PC-3 (cell line): ENCODE measurements at regions of chr20 and their contacts with region 1.

Region 1: GRCh38 chr20:5658912-5659345 is 91.3 kb upstream of the SHLD1 start:
- DNase-seq: peak; percentile 12
- ATAC-seq: no peak
- H3K4me3 ChIP-seq: no peak overlapping the region
- H3K27ac ChIP-seq: no peak overlapping the region
- H3K4me1 ChIP-seq: peaks cover 36% of the 10 kb centered on the region
- H3K27me3 ChIP-seq: no peaks in the 10 kb centered on the region
- CTCF ChIP-seq: no peak

Region 2: DNA sequence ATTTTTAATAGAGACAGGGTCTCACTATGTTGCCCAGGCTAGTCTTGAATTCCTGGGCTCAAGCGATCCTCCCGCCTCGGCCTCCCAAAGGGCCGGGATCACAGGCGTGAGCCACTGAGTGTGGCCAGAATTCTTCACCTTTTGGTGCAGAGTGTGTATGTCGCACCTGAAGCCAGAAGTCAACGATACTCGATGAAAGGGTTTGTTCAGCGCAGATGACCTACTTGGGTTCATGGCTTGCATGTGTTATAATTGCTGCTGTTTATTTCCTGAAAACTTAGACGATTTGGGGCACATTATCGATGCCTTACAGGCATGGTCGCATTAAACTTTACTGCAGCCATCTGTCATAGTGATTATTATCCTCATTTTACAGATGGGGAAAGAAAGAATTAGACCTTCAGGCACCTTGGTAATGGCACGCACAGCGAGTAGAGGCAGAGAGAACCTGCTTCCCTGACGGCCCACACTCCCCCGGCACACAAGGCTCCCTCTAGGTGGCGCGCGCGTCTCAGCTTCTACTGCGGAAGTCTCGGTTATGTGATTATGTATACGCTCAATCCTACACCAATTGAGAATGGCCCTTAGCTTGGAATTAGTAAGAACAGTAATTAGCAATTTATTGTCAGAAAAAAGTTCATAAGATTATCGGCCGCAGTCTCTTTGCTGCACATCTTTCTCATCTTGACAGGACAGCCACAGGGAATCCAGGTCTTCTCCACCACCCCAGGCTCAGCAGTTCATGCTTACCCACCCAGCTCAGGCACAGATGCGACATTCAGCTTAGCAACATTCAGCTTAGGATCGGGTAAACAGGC is 129.4 kb before region 1 on chr20:
- CTCF ChIA-PET with region 1: no interaction called
- POLR2A ChIA-PET with region 1: no interaction called
- intact Hi-C with region 1: no loop called
- DNase-seq: peak; percentile 87
- ATAC-seq: peak; percentile 88
- H3K4me3 ChIP-seq: peak overlapping the region; percentile 57
- H3K27ac ChIP-seq: no peak overlapping the region
- H3K4me1 ChIP-seq: peaks cover 3% of the 10 kb centered on the region; the same call in 1 of the 2 replicates
- H3K27me3 ChIP-seq: 0 out of 2 replicates have a peak, but pooled peaks cover 3% of the 10 kb centered on the region
- CTCF ChIP-seq: peak; percentile 98

Region 3: GRCh38 chr20:5608442-5609161 is 50.3 kb before region 1 on chr20:
- CTCF ChIA-PET with region 1: no interaction called
- POLR2A ChIA-PET with region 1: interaction called, 4 read pairs
- intact Hi-C with region 1: loop called (anchors 1 kb)
- DNase-seq: peak; percentile 63
- ATAC-seq: 0 out of 2 replicates have a peak, but pooled peaks have one; percentile 6
- H3K4me3 ChIP-seq: peak overlapping the region; percentile 77
- H3K27ac ChIP-seq: peak overlapping the region; percentile 71
- H3K4me1 ChIP-seq: peaks cover 40% of the 10 kb centered on the region
- H3K27me3 ChIP-seq: no peaks in the 10 kb centered on the region
- CTCF ChIP-seq: no peak

Region 4: DNA sequence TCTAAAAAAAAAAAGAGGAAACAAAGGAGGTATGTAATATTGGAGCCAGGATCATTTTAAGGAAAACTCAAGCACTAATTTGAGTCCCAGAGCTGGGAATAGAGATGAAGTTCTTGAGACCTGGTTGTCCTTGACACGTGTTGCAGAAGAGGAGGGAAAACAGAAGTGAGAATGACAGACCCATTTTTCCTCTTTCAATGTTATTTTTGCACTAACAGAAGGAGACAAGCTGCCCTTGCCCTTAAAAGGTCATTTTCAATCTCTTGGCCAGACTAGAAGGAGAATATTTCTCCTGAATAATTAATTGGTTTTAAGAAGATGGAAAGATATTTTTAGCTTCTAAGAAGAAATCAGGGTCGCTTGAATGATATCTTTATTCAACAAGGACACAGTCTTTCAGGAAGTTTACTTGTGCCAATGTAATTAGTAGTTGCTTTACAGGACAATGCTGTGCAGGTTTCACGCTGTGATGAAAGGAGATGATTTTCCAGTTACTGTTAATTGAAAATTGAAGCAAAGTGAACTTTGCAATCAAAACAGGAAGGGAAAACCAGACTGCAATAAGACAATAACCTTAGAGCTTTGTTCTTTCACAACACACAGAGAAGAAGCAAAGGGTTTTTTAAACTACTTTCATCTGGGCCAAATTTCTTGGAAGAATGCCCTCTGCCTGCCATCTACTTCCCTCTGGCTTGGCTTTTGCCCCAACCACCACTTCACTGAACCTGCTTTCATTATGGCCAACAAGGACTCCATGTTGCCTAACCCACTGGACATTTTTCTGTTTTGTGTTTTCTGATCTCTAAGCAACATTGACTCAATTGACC is 16.6 kb before region 1 on chr20:
- CTCF ChIA-PET with region 1: interaction called, 9 read pairs
- POLR2A ChIA-PET with region 1: interaction called, 8 read pairs
- intact Hi-C with region 1: loop called (anchors 1 kb)
- DNase-seq: no peak
- ATAC-seq: no peak
- H3K4me3 ChIP-seq: no peak overlapping the region
- H3K27ac ChIP-seq: no peak overlapping the region
- H3K4me1 ChIP-seq: peaks cover 15% of the 10 kb centered on the region
- H3K27me3 ChIP-seq: no peaks in the 10 kb centered on the region
- CTCF ChIP-seq: no peak

Region 5: GRCh38 chr20:5719861-5720401 is 61.0 kb after region 1 on chr20:
- CTCF ChIA-PET with region 1: no interaction called
- POLR2A ChIA-PET with region 1: no interaction called
- intact Hi-C with region 1: loop called (anchors 5 kb)
- DNase-seq: peak; percentile 92
- ATAC-seq: peak; percentile 32
- H3K4me3 ChIP-seq: no peak overlapping the region
- H3K27ac ChIP-seq: peak overlapping the region; percentile 50
- H3K4me1 ChIP-seq: peaks cover 40% of the 10 kb centered on the region
- H3K27me3 ChIP-seq: no peaks in the 10 kb centered on the region
- CTCF ChIP-seq: no peak

Region 6: DNA sequence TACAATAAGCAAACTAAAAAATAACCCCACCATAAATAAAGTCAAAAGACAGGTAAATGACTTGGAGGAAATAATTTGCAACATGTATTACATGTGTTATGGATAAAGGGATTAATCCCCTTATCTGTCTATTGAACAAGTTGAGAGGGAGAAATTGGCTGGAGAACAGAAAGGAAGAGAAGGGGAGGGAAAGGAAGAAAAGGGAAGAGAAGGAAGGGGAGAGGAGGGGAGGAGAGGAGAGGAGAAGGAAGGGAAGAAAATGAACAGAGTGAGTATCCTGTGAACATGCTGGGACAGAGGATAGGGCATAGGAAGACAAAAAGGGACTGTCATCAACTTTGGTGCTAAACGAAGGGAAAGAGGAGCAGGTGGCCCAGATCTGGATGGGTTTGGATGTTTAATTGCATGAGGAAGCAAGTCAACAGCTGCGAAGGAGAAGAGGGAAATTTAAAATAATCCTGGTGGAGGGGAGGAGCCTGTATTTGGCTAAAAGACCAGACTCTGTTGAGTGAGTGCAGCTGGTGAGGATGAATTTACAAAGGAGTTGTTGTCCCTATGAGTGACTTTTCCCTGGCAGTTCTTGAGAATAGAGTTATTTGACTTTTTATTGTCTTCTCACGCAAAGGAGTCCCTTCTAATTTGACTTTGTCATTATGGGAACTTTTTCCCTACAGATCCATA is 77.1 kb after region 1 on chr20:
- CTCF ChIA-PET with region 1: no interaction called
- POLR2A ChIA-PET with region 1: no interaction called
- intact Hi-C with region 1: loop called (anchors 5 kb)
- DNase-seq: no peak
- ATAC-seq: no peak
- H3K4me3 ChIP-seq: no peak overlapping the region
- H3K27ac ChIP-seq: peak overlapping the region; percentile 90
- H3K4me1 ChIP-seq: peaks cover 33% of the 10 kb centered on the region
- H3K27me3 ChIP-seq: no peaks in the 10 kb centered on the region
- CTCF ChIP-seq: no peak

Region 7: DNA sequence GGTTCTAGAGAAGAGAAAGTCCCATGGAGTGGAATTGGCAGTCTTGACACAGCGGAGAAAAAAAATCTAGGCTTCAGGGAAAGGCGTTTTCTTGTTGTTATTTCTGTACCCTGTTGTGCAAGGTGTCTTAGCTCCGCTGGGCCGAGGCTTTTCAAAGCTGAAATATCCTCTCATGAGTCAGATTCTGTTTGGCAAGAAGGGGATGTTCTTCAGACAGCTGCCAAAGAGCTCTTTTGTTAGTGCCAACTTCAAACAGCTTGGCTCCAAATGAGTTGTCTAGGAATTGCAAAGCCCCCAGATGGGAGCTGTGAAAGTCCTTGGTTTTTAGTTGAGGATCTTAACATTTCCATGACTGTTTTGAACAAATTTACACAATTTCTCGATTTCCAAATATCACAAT is 349.3 kb after region 1 on chr20:
- CTCF ChIA-PET with region 1: no interaction called
- POLR2A ChIA-PET with region 1: no interaction called
- intact Hi-C with region 1: no loop called
- DNase-seq: peak; percentile 92
- ATAC-seq: peak; percentile 36
- H3K4me3 ChIP-seq: peak overlapping the region; percentile 96
- H3K27ac ChIP-seq: no peak overlapping the region; the same call in 1 of the 2 replicates
- H3K4me1 ChIP-seq: peaks cover 23% of the 10 kb centered on the region
- H3K27me3 ChIP-seq: no peaks in the 10 kb centered on the region
- CTCF ChIP-seq: no peak